MCF 10A (cell line): ENCODE measurements at regions of chr16 and their contacts with region 1.

Region 1: DNA sequence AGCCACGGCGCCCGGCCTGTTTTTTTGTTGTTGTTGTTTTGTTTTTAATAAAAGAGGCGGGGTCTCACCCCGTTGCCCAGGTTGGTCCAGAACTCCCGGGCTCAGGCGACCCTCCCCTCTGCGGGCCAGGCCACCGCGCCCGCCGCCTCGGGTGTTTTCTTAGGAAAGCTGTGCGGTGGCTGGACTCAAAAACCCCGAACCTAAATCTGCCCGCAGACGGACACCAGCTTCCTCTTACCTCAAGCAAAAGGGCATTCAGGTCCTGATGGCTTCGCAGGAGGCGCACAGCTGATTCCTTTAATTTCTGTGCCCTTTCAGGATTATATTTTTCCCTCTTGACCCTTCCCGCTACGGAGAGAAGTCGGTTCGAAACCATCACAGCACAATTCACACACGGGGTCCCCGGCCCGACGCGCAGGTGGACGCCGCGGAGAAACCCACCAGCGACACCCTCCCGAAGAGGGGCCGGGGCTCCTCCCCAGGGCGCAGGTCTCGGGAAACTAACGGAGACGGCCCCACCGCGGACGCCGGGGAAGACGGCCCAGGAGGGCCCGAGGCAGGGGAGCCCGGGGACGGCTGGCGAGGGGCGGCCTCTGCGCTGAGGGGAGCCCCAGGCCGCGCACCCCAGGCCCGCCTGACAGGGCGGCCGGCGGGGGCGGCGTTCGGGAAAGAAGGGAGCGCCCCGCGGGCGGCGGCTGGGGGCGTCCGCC is 653 bp downstream of the FANCA start:
- DNase-seq: no peak
- H3K4me3 Mint-ChIP-seq: peak overlapping the region; percentile 76
- H3K27ac Mint-ChIP-seq: no peak overlapping the region
- H3K4me1 Mint-ChIP-seq: no peaks in the 10 kb centered on the region
- H3K27me3 Mint-ChIP-seq: no peaks in the 10 kb centered on the region
- CTCF ChIP-seq: no peak

Region 2: DNA sequence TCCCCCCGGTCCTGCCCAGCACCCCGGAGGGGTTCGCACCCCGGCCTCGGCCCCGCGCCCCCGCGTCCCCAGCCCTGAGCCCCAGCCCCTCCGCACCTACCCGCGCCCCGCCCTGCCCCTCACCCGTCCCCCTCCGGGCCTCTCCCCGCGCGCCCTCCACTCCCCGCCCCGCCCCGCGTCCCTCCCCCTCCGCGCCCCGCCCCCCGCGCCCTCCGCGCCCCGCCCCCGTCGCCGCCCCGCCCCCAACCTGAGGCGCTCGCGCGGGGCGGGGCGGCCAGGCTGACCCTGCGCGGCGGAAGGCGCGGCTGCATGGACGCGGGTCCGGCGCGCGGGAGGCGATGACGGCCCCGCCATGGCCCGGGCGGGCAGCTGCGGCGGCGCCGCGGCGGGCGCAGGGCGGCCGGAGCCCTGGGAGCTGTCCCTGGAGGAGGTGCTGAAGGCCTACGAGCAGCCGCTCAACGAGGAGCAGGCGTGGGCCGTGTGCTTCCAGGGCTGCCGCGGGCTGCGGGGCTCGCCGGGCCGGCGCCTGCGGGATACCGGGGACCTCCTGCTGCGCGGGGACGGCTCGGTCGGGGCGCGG is 12.5 kb after region 1 on chr16 and contains the start of gene SPIRE2:
- CTCF ChIA-PET with region 1: no interaction called
- POLR2A ChIA-PET with region 1: interaction called, 21 read pairs
- intact Hi-C with region 1: no loop called
- DNase-seq: peak; percentile 58
- H3K4me3 Mint-ChIP-seq: peak within 1 kb of the TSS; percentile 73
- H3K27ac Mint-ChIP-seq: peak within 1 kb of the TSS; percentile 61
- H3K4me1 Mint-ChIP-seq: no peaks in the 10 kb centered on the region
- H3K27me3 Mint-ChIP-seq: no peaks in the 10 kb centered on the region
- CTCF ChIP-seq: no peak
- total RNA-seq, gene SPIRE2: 3.8 and 4.8 TPM in 2 replicates